ENCODE measurements at regions of chr22 and their contacts with region 1.

Region 1: GRCh38 chr22:32991353-32992121 is 66.6 kb downstream of the SYN3 start:
- DNase-seq: no peak
- H3K4me3 ChIP-seq: no peak overlapping the region
- H3K27ac ChIP-seq: no peak overlapping the region
- H3K4me1 ChIP-seq: no peaks in the 10 kb centered on the region
- H3K27me3 ChIP-seq: no peaks in the 10 kb centered on the region
- CTCF ChIP-seq: no peak
- POLR2A ChIP-seq: no peak

Region 2: GRCh38 chr22:32655068-32655467 is 336.5 kb before region 1 on chr22:
- intact Hi-C with region 1: loop called (anchors 5 kb)
- DNase-seq: no peak
- H3K4me3 ChIP-seq: no peak overlapping the region
- H3K27ac ChIP-seq: no peak overlapping the region
- H3K4me1 ChIP-seq: no peaks in the 10 kb centered on the region
- H3K27me3 ChIP-seq: no peaks in the 10 kb centered on the region
- CTCF ChIP-seq: no peak
- POLR2A ChIP-seq: no peak

Measured in thyroid gland (tissue), 4 donors.